ENCODE measurements at regions of chr17 and their contacts with region 1.

Region 1: DNA sequence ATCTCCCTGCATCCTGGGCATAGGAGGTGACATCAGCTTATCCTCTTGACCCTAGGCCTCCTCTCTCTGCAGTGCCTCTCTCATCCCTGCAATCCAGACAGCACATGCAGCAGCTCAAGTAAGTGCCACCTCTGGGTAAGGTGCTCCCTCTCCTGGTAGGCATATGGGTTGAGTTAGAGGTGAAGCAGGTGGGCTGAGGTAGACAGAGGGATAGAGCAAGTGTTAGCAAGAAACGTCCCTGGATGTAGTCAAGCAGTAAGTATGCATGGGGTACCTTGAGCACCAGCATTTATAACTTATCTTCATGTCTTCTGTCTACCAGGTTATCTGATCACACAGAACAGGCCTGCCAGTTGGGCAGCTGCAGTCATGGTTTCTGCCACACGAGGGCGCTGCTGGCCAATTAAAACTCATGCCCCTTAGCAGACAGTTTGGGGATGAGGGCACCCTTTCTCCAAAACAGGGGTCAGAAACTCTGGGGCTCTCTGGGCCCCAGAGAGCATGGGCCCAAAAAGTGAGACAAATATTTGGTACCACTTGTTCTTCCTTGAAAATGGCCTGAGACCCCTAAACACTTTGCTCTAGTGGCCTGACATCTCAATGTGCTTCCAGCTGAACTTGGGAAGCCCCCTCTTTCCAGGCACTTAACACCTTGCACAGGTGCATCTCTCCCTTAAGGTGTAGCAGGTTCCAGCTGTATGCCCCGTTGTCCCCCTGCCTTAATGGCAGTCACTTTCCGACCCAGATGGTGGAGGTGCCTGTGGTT is 59.8 kb downstream of the NEUROD2 start:
- DNase-seq: peak; percentile 83
- H3K4me3 Mint-ChIP-seq: no peak overlapping the region
- H3K27ac Mint-ChIP-seq: no peak overlapping the region
- H3K4me1 Mint-ChIP-seq: no peaks in the 10 kb centered on the region
- H3K27me3 Mint-ChIP-seq: no peaks in the 10 kb centered on the region

Region 2: DNA sequence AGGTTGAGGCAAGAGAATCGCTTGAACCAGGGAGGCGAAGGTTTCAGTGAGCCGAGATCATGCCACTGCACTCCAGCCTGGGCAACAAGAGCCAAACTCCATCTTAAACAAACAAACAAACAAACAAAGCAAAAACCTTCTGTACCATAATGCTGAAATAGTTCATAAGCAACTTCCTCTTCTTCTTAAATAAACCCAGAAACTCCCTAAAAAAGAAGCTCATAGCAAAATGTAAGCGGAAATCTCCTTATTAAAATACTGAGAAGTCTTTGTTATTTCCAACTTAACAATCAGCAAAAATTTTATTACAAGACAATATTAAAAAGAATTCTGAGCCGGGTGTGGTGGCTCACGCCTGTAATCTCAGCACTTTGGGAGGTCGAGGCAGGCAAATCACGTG is 229.3 kb before region 1 on chr17:
- CTCF ChIA-PET with region 1: no interaction called
- POLR2A ChIA-PET with region 1: no interaction called
- intact Hi-C with region 1: no loop called
- DNase-seq: no peak
- H3K4me3 Mint-ChIP-seq: no peak overlapping the region
- H3K27ac Mint-ChIP-seq: no peak overlapping the region
- H3K4me1 Mint-ChIP-seq: no peaks in the 10 kb centered on the region
- H3K27me3 Mint-ChIP-seq: no peaks in the 10 kb centered on the region

Region 3: DNA sequence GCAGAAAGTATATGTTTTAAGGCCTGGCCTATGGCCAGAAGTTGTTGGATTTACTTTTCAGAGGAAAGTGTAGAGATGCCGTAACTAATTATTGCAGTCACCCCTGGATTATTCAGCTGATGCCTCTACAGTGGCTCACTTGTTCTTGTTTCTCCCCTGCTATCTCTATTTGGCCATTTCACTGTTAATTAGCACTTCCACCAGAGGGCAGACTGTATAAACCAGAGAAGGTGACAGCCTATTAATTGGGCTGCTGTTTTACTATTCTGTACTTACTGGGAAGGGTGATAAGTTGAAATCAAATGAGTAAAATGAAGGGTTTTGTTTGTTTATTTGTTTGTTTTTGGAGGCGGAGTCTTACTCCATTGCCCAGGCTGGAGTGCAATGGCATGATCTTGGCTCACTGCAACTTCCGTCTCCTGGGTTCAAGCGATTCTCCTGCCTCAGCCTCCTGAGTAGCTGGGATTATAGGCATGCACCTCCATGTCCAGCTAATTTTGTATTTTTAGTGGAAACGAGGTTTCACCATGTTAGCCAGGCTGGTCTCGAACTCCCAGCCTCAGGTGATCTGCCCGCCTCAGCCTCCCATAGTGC is 20.6 kb before region 1 on chr17:
- CTCF ChIA-PET with region 1: interaction called, 10 read pairs
- POLR2A ChIA-PET with region 1: no interaction called
- intact Hi-C with region 1: loop called (anchors 2 kb)
- DNase-seq: no peak
- H3K4me3 Mint-ChIP-seq: no peak overlapping the region
- H3K27ac Mint-ChIP-seq: no peak overlapping the region
- H3K4me1 Mint-ChIP-seq: peaks cover 13% of the 10 kb centered on the region
- H3K27me3 Mint-ChIP-seq: no peaks in the 10 kb centered on the region

Region 4: GRCh38 chr17:39536468-39536867 is 11.4 kb before region 1 on chr17:
- CTCF ChIA-PET with region 1: interaction called, 10 read pairs
- POLR2A ChIA-PET with region 1: no interaction called
- intact Hi-C with region 1: no loop called
- DNase-seq: no peak
- H3K4me3 Mint-ChIP-seq: no peak overlapping the region
- H3K27ac Mint-ChIP-seq: no peak overlapping the region
- H3K4me1 Mint-ChIP-seq: peaks cover 22% of the 10 kb centered on the region
- H3K27me3 Mint-ChIP-seq: no peaks in the 10 kb centered on the region

Region 5: DNA sequence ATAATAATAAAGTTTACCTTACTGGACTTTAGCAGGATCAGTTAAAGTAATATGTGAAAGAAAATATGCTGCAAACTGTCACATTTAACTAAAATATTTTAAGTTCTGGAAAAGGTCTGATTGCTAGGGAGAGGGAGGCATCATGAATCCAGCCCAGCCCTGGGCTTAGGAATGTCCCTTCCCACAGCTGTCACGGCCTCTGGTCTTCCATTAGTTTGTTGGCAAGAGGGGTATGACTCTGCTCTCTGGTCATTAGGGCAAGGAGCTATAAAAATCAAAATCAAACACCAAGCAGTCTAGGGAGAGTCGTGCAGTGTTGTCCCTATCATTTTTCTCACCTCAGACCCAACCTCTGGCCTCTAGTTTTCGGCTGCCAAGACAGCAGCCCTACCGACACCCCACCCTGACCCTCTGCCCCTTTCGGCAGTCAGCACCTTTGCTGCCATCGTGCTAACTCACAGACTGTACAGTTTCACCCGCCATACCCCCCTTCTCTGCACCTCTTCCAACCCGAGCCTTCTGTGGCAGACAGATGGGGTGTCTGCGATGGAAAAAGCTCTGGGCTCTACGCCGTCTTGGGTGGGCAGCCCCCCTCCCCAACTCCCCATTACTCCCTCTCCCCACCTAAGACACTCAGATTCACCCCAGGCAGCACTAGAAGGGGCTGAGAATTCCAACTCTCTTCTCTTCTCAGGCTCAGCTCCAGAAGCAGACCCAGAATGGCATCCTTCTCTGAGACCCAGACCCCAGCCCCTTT is 18.4 kb after region 1 on chr17:
- CTCF ChIA-PET with region 1: interaction called, 10 read pairs
- POLR2A ChIA-PET with region 1: no interaction called
- intact Hi-C with region 1: no loop called
- DNase-seq: no peak
- H3K4me3 Mint-ChIP-seq: no peak overlapping the region
- H3K27ac Mint-ChIP-seq: no peak overlapping the region
- H3K4me1 Mint-ChIP-seq: no peaks in the 10 kb centered on the region
- H3K27me3 Mint-ChIP-seq: no peaks in the 10 kb centered on the region

Region 6: GRCh38 chr17:39636927-39637736 is 89.2 kb after region 1 on chr17 and contains the start of gene STARD3:
- CTCF ChIA-PET with region 1: interaction called, 10 read pairs
- POLR2A ChIA-PET with region 1: no interaction called
- intact Hi-C with region 1: no loop called
- DNase-seq: peak; percentile 95
- H3K4me3 Mint-ChIP-seq: peak within 1 kb of the TSS; percentile 88
- H3K27ac Mint-ChIP-seq: peak within 1 kb of the TSS; percentile 83
- H3K4me1 Mint-ChIP-seq: peaks cover 51% of the 10 kb centered on the region
- H3K27me3 Mint-ChIP-seq: no peaks in the 10 kb centered on the region
- total RNA-seq, gene STARD3: 53.6 to 60.3 TPM

Region 7: GRCh38 chr17:39653662-39654331 is 105.9 kb after region 1 on chr17:
- CTCF ChIA-PET with region 1: interaction called, 10 read pairs
- POLR2A ChIA-PET with region 1: no interaction called
- intact Hi-C with region 1: no loop called
- DNase-seq: peak; percentile 88
- H3K4me3 Mint-ChIP-seq: no peak overlapping the region
- H3K27ac Mint-ChIP-seq: no peak overlapping the region
- H3K4me1 Mint-ChIP-seq: peaks cover 7% of the 10 kb centered on the region
- H3K27me3 Mint-ChIP-seq: no peaks in the 10 kb centered on the region

Region 8: DNA sequence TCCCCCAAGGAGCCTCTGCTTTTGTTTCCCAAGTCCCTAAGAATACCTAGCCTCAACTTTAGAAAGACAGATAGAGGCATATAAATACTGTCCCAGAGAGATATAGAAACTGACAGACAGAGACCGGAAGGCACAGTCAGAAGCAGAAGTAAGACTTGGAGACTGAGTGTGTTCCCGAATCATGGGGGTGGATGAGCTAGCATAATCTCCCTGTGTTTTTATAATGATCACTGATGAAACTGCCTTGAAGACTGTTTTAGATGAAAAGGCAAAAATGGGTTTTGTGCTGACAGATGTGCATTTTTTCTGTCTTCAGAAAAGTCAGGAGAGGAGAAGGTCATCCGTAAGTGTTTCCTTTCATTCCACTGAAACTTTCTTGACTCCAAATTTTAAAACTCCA is 424.4 kb after region 1 on chr17:
- CTCF ChIA-PET with region 1: no interaction called
- POLR2A ChIA-PET with region 1: no interaction called
- intact Hi-C with region 1: loop called (anchors 2 kb)
- DNase-seq: peak; percentile 25
- H3K4me3 Mint-ChIP-seq: no peak overlapping the region
- H3K27ac Mint-ChIP-seq: peak overlapping the region; percentile 19
- H3K4me1 Mint-ChIP-seq: peaks cover 11% of the 10 kb centered on the region
- H3K27me3 Mint-ChIP-seq: peaks cover 16% of the 10 kb centered on the region